ENCODE measurements at regions of chr2 and their contacts with region 1.

Region 1: DNA sequence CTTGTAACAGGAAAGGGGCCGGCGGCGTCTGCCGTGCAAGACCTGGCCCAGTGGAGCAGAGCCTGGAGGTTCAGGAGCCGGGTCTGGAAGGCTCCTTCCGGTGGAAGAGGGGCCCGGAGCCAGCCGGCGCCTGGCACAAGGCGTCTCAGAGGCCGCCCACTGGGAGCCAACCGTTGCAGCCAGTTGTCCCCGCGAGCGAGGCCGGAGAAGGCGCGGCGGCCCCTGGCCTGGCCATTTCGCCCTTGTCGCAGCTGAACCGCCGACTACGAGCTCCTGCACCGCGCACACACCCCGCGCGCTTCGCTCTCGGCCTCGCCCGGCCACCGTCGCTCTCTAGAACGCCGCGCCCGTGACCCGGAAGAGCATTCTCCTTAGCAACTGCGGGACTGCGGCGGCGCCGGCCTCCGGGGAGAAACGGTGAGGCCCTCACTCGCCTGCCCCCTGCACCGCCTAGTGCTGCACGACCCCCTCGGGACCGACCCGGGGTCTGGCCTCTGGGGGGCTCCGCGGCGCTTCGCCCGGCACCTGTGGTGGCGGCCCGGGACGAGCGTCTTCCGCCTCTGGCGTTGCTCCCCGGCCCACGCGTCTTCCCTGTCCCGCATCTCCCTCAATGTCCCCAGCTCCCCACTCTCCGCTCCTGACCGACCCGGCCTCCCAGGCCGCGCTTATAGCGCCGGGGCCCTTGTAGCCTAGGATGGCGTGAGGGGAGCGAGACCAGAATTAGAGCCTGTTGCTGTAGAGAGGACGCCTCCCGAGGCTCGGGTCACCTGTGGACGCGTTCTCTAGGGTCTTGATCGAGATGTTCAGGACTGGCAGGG is at the start of gene DIS3L2:
- DNase-seq: peak; percentile 91
- ATAC-seq: peak; percentile 94
- H3K4me3 Mint-ChIP-seq: peak within 1 kb of the TSS; percentile 90
- H3K27ac Mint-ChIP-seq: peak within 1 kb of the TSS; percentile 96
- H3K4me1 Mint-ChIP-seq: peaks cover 41% of the 10 kb centered on the region
- H3K27me3 Mint-ChIP-seq: peaks cover under 1% of the 10 kb centered on the region
- total RNA-seq, gene DIS3L2: 25.6 to 34.5 TPM

Region 2: DNA sequence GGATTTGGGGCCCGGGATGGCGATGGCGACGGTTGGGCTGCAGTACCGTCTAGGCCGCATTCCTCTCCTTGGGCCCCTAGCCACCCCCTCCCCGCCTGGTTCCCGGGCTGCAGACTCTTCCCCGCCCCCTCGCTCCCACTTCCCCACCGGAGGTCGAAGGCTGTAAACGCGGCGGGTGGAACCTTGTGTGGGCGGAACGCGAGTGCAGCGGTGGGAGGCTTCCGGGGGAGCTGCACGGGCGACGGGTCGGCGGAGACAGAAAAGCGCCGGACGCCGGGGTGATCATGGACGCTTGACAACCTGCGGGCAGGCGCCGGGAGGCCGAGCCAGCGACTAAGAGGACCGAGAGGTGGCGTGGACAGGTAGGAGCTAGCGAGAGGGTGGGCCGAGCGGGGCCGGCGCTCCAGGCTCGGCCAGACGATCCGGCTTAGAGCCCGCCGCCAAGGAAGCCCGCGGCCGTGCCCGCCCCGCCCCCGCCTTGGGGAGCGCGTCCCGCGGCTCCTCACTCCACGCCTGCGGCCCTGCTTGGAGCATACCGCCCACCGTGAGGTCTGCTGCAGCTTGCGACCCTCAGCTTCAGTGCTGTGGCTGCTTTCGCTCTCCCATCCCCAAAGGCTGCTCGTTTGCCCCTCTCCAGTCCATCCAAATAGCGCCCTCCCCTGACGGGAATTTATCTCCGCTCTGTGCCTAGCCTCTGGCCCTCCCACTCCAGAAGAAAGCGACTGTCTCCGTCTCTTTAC is 175.2 kb before region 1 on chr2 and contains the start of gene COPS7B:
- CTCF ChIA-PET with region 1: no interaction called
- POLR2A ChIA-PET with region 1: no interaction called
- intact Hi-C with region 1: loop called in 1 of 2 experiments (anchors 1 kb)
- DNase-seq: peak; percentile 93
- ATAC-seq: peak; percentile 67
- H3K4me3 Mint-ChIP-seq: peak within 1 kb of the TSS; percentile 93
- H3K27ac Mint-ChIP-seq: peak within 1 kb of the TSS; percentile 89
- H3K4me1 Mint-ChIP-seq: peaks cover 65% of the 10 kb centered on the region
- H3K27me3 Mint-ChIP-seq: no peaks in the 10 kb centered on the region
- total RNA-seq, gene COPS7B: 51.8 to 53.6 TPM

Region 3: GRCh38 chr2:231909631-231910030 is 51.9 kb before region 1 on chr2:
- CTCF ChIA-PET with region 1: no interaction called
- POLR2A ChIA-PET with region 1: no interaction called
- intact Hi-C with region 1: no loop called
- DNase-seq: no peak
- ATAC-seq: no peak
- H3K4me3 Mint-ChIP-seq: no peak overlapping the region
- H3K27ac Mint-ChIP-seq: no peak overlapping the region
- H3K4me1 Mint-ChIP-seq: peaks cover 13% of the 10 kb centered on the region
- H3K27me3 Mint-ChIP-seq: no peaks in the 10 kb centered on the region

Region 4: GRCh38 chr2:232026910-232027309 is 65.4 kb after region 1 on chr2:
- CTCF ChIA-PET with region 1: interaction called, 3 read pairs
- POLR2A ChIA-PET with region 1: no interaction called
- intact Hi-C with region 1: loop called in 1 of 2 experiments (anchors 2 kb)
- DNase-seq: no peak
- ATAC-seq: peak; percentile 95
- H3K4me3 Mint-ChIP-seq: no peak overlapping the region
- H3K27ac Mint-ChIP-seq: peak overlapping the region; percentile 48
- H3K4me1 Mint-ChIP-seq: peaks cover 29% of the 10 kb centered on the region
- H3K27me3 Mint-ChIP-seq: no peaks in the 10 kb centered on the region

Region 5: GRCh38 chr2:232236200-232236599 is 274.6 kb after region 1 on chr2:
- CTCF ChIA-PET with region 1: interaction called, 3 read pairs
- POLR2A ChIA-PET with region 1: no interaction called
- intact Hi-C with region 1: loop called in 1 of 2 experiments (anchors 1 kb)
- DNase-seq: no peak
- ATAC-seq: peak; percentile 69
- H3K4me3 Mint-ChIP-seq: no peak overlapping the region
- H3K27ac Mint-ChIP-seq: peak overlapping the region; percentile 58
- H3K4me1 Mint-ChIP-seq: peaks cover 64% of the 10 kb centered on the region
- H3K27me3 Mint-ChIP-seq: no peaks in the 10 kb centered on the region

Region 6: DNA sequence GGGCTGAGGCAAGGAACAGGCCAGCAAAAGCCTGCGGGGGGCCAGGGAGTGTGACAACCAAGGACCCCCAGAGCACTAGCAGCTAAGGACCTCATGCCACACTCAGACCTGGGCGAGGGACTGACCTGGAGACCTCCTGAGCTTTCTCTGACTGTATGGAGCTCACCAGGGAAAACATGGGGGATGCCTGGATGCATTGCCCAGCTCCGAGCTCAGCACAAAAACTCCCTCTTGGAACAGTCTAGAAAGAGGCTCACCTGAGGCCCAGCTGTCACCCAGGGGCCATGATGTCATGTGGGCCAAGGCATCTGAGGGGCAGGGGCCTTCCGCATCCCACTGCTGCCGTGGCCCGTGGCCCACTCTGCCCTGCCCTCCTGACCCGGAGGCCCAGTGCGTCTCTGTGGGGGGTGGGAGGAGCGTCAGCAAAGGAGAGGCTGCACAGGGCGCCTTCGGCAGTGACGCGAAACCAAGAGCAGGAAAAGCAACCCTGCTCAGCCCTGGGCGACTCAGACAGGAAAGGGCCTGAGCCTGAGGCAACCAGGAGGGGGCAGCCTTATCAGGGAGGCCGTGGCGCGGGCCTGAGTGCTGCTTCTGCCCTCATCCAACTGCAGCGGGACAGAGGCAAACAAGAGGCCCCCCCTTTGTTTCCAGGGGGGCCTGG is 359.7 kb after region 1 on chr2:
- CTCF ChIA-PET with region 1: interaction called, 3 read pairs
- POLR2A ChIA-PET with region 1: no interaction called
- intact Hi-C with region 1: loop called in 1 of 2 experiments (anchors 1 kb)
- DNase-seq: peak; percentile 88
- ATAC-seq: peak; percentile 90
- H3K4me3 Mint-ChIP-seq: peak overlapping the region; percentile 44
- H3K27ac Mint-ChIP-seq: peak overlapping the region; percentile 89
- H3K4me1 Mint-ChIP-seq: peaks cover 64% of the 10 kb centered on the region
- H3K27me3 Mint-ChIP-seq: no peaks in the 10 kb centered on the region

Region 7: GRCh38 chr2:232550354-232551249 is 589.0 kb after region 1 on chr2 and contains the starts of genes EIF4E2 and TIGD1:
- CTCF ChIA-PET with region 1: no interaction called
- POLR2A ChIA-PET with region 1: no interaction called
- intact Hi-C with region 1: loop called in 1 of 2 experiments (anchors 1 kb)
- DNase-seq: peak; percentile 96
- ATAC-seq: peak; percentile 95
- H3K4me3 Mint-ChIP-seq: peak within 1 kb of the TSS; percentile 98
- H3K27ac Mint-ChIP-seq: peak within 1 kb of the TSS; percentile 100
- H3K4me1 Mint-ChIP-seq: peaks cover 66% of the 10 kb centered on the region
- H3K27me3 Mint-ChIP-seq: no peaks in the 10 kb centered on the region
- total RNA-seq, gene EIF4E2: 57.0 to 68.0 TPM
- total RNA-seq, gene TIGD1: 7.6 to 7.9 TPM

Measured in activated CD4-positive, alpha-beta T cell treated with anti-CD3 and anti-CD28 coated beads for 36 hours (primary cell).